H1 (cell line): ENCODE measurements at regions of chr3 and their contacts with region 1.

Region 1: DNA sequence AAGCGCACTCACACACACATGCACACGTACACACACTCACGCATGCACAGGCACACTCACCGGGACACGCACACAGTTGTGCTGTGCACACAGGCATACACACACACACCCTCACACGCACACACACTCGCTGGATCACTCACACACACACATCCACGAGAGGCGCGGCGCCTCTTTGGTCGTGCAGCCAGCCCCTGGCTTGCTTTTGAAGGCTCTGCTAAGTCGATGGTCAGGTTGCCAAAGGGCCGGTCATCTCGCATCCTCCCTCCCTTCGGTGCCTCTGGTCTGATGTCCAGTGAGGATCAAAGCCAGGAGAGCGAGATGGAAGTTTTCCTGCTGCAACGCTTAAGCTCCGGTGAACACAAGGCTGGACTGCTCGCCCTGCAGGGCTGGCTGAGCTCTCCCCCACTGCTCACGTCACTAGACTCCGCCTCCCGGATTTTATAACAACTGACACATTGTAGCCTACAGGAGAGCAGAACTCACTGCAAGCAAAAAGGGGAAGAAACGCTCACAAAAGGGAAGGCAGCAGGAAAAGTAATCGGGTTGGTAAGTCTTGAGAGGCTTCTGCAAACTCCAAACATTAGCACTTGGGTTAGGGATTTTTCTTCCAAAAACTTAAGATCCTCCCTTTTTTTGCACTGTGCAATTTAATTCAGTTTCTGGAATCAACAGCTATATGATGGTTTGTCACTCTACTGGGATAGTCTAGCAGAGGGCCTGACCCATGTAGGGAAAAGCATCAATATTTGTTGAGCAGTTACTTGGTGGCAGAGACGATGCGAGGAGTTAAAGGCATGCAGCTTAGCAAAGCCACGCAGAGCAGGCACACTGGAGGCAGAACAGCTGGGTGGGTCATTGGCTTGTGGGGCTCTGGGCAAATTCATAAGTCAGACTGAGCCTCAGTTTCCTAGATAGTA is at the start of gene SRGAP3:
- DNase-seq: peak; percentile 54 to 87
- H3K4me3 ChIP-seq: peak within 1 kb of the TSS; percentile 59 to 74 (median 72)
- H3K27ac ChIP-seq: no peak within 1 kb of the TSS
- H3K4me1 ChIP-seq: peaks cover 7 to 23% (median 16%) of the 10 kb centered on the region in 4 experiments
- H3K27me3 ChIP-seq: no peaks in the 10 kb centered on the region; a peak in 1 of 7 replicates
- CTCF ChIP-seq: peak in 2 of 3 experiments; percentile 34 to 45; a peak in 2 of 4 replicates
- EP300 ChIP-seq: no peak
- POLR2A ChIP-seq: peak in 1 of 2 experiments; percentile 54; a peak in 2 of 3 replicates
- RAD21 ChIP-seq: peak; percentile 36 to 46
- total RNA-seq, gene SRGAP3: 9.4 and 11.4 TPM in 2 replicates

Region 2: GRCh38 chr3:9098569-9099367 is 150.8 kb before region 1 on chr3:
- CTCF ChIA-PET with region 1: interaction called, 11 read pairs
- POLR2A ChIA-PET with region 1: no interaction called
- DNase-seq: no peak
- H3K4me3 ChIP-seq: no peak overlapping the region
- H3K27ac ChIP-seq: no peak overlapping the region
- H3K4me1 ChIP-seq: peaks cover 4 to 22% (median 18%) of the 10 kb centered on the region in 4 experiments; a peak in 5 of 7 replicates
- H3K27me3 ChIP-seq: no peaks in the 10 kb centered on the region
- CTCF ChIP-seq: no peak
- EP300 ChIP-seq: no peak
- POLR2A ChIP-seq: no peak
- RAD21 ChIP-seq: no peak

Region 3: GRCh38 chr3:9231471-9231870 is 18.1 kb before region 1 on chr3:
- CTCF ChIA-PET with region 1: interaction called, 24 read pairs
- POLR2A ChIA-PET with region 1: interaction called, 3 read pairs
- DNase-seq: no peak
- H3K4me3 ChIP-seq: no peak overlapping the region
- H3K27ac ChIP-seq: no peak overlapping the region
- H3K4me1 ChIP-seq: peaks cover 3 to 17% (median 9%) of the 10 kb centered on the region in 4 experiments; a peak in 6 of 7 replicates
- H3K27me3 ChIP-seq: no peaks in the 10 kb centered on the region
- CTCF ChIP-seq: no peak
- EP300 ChIP-seq: no peak
- POLR2A ChIP-seq: no peak
- RAD21 ChIP-seq: no peak

Region 4: GRCh38 chr3:9422712-9423424 is 173.3 kb after region 1 on chr3:
- CTCF ChIA-PET with region 1: no interaction called
- POLR2A ChIA-PET with region 1: no interaction called
- DNase-seq: no peak
- H3K4me3 ChIP-seq: peak overlapping the region in 1 of 4 experiments; percentile 5; a peak in 1 of 8 replicates
- H3K27ac ChIP-seq: peak overlapping the region; percentile 76
- H3K4me1 ChIP-seq: peaks cover 3 to 7% (median 5%) of the 10 kb centered on the region in 4 experiments; a peak in 5 of 7 replicates
- H3K27me3 ChIP-seq: no peaks in the 10 kb centered on the region
- CTCF ChIP-seq: peak in 2 of 3 experiments; percentile 26 to 62; a peak in 2 of 4 replicates
- EP300 ChIP-seq: no peak
- POLR2A ChIP-seq: no peak
- RAD21 ChIP-seq: peak; percentile 69 to 71